Activated CD8-positive, alpha-beta memory T cell treated with anti-CD3 and anti-CD28 coated beads, Interleukin-2, amount 10 ng/mL, durations not matched to agents 7 days and 5 days (primary cell): ENCODE measurements at regions of chr20 and their contacts with region 1.

Region 1: DNA sequence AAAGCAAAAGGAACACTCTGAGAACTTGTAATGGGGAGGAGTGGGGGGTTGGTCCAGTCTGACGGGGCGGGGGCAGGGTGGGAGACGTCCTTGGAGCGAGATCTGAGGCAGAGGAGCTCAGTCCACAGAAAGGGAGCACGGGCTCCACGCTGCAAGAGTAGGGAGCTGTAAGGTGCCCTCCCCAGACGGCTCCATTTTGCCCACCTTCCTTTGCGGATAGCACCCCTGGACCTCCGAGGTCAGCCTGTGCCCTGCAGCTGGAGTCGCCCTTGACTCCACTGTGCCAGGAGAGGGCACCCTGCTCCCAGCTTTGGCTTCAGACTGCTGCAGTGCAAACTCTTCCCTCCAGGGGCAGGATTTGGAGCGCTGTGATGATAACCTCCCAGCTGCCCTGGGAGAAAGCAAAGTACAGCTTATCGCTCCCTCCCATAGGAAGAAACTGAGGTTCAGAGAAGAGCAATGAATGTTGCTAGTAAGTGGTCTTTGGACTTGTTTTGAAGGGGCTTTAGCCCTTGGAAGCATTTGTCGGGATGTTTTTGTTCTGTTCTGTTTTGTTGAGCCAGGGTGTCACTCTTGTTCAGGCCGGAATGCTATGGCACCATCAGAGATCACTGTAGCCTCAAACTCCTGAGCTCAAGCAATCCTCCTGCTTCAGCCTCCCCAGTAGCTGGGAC is 9.5 kb upstream of the AHCY start:
- DNase-seq: peak; percentile 92
- ATAC-seq: peak; percentile 100
- H3K4me3 Mint-ChIP-seq: no peak overlapping the region
- H3K27ac Mint-ChIP-seq: no peak overlapping the region
- H3K4me1 Mint-ChIP-seq: peaks cover 17% of the 10 kb centered on the region
- H3K27me3 Mint-ChIP-seq: peaks cover 27% of the 10 kb centered on the region

Region 2: GRCh38 chr20:33915726-33916331 is 396.9 kb before region 1 on chr20:
- CTCF ChIA-PET with region 1: no interaction called
- DNase-seq: peak; percentile 67
- ATAC-seq: peak; percentile 81
- H3K4me3 Mint-ChIP-seq: no peak overlapping the region
- H3K27ac Mint-ChIP-seq: no peak overlapping the region
- H3K4me1 Mint-ChIP-seq: peaks cover 19% of the 10 kb centered on the region
- H3K27me3 Mint-ChIP-seq: peaks cover 3% of the 10 kb centered on the region

Region 3: GRCh38 chr20:34190679-34191090 is 122.0 kb before region 1 on chr20:
- CTCF ChIA-PET with region 1: interaction called, 14 read pairs
- DNase-seq: peak; percentile 52
- ATAC-seq: peak; percentile 53
- H3K4me3 Mint-ChIP-seq: no peak overlapping the region
- H3K27ac Mint-ChIP-seq: no peak overlapping the region
- H3K4me1 Mint-ChIP-seq: peaks cover 10% of the 10 kb centered on the region
- H3K27me3 Mint-ChIP-seq: peaks cover 53% of the 10 kb centered on the region

Region 4: DNA sequence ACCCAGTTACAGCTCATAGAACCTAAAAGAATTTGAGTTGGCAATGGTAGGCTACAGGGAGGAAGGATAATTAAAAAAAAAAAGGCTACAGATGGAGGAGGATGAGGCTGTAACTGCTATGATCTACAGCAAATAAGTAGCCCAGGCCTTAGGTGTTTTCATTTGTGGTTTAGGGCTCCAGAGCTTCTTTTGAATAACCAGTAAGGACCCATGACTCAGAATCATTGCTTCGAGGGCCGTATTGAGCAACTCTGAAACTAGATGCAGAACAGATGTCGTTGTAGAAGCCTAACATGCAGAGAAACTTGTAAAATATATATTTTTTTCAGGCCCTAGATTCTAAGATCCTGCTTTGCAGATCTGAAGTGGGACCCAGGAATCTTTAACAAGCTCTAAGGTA is 90.5 kb before region 1 on chr20:
- CTCF ChIA-PET with region 1: no interaction called
- DNase-seq: no peak
- ATAC-seq: no peak
- H3K4me3 Mint-ChIP-seq: no peak overlapping the region
- H3K27ac Mint-ChIP-seq: no peak overlapping the region
- H3K4me1 Mint-ChIP-seq: no peaks in the 10 kb centered on the region
- H3K27me3 Mint-ChIP-seq: peaks cover 27% of the 10 kb centered on the region

Region 5: DNA sequence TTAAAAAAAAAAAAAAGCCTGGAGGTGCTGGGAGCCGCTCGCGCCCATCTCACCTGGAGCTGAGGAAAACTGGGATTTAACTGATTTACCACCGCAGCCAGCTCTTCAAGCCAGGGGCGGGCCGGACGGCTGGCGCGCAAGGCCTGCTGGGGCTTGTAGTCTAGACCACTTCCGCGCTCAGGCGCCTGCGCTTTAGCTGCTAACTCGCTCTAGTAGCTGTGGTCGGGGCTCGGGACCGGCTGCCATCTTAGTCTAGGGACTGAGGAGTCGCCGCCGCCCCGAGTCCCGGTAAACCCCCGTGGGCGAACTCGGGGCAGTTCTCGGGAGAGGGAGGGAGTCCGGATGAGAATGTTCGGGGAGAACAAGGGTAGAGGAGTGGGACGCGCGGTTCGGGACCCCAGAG is 50.4 kb after region 1 on chr20 and contains the start of gene ITCH:
- CTCF ChIA-PET with region 1: interaction called, 26 read pairs
- DNase-seq: peak; percentile 96
- ATAC-seq: peak; percentile 98
- H3K4me3 Mint-ChIP-seq: peak within 1 kb of the TSS; percentile 94
- H3K27ac Mint-ChIP-seq: peak within 1 kb of the TSS; percentile 98
- H3K4me1 Mint-ChIP-seq: peaks cover 39% of the 10 kb centered on the region
- H3K27me3 Mint-ChIP-seq: no peaks in the 10 kb centered on the region
- total RNA-seq, gene ITCH: 51.6 to 57.9 TPM

Region 6: DNA sequence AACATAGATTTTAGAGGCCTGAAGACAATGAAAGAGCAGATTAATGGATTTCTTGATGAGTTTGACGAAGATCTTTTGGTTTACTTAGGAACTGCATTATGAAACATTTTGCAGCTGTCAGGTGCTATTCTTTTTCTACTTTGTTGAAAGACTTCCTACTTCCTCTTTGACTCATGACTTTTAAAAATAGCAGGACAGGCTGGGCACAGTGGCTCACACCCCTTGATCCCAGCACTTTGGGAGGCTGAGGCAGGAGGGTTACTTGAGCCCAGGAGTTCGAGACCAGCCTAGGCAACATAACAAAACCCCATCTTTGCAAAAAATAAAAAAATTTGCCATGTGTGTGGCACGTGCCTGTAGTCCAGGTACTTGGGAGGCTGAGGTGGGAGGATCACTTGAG is 102.4 kb after region 1 on chr20:
- CTCF ChIA-PET with region 1: interaction called, 13 read pairs
- DNase-seq: no peak
- ATAC-seq: no peak
- H3K4me3 Mint-ChIP-seq: no peak overlapping the region
- H3K27ac Mint-ChIP-seq: peak overlapping the region; percentile 29
- H3K4me1 Mint-ChIP-seq: peaks cover 19% of the 10 kb centered on the region
- H3K27me3 Mint-ChIP-seq: no peaks in the 10 kb centered on the region

Region 7: GRCh38 chr20:34473262-34473883 is 160.7 kb after region 1 on chr20:
- CTCF ChIA-PET with region 1: interaction called, 36 read pairs
- DNase-seq: peak; percentile 59
- ATAC-seq: peak; percentile 61
- H3K4me3 Mint-ChIP-seq: no peak overlapping the region
- H3K27ac Mint-ChIP-seq: no peak overlapping the region
- H3K4me1 Mint-ChIP-seq: peaks cover 12% of the 10 kb centered on the region
- H3K27me3 Mint-ChIP-seq: no peaks in the 10 kb centered on the region

Region 8: GRCh38 chr20:34522969-34523871 is 210.5 kb after region 1 on chr20:
- CTCF ChIA-PET with region 1: interaction called, 110 read pairs
- DNase-seq: peak; percentile 64
- ATAC-seq: peak; percentile 65
- H3K4me3 Mint-ChIP-seq: no peak overlapping the region
- H3K27ac Mint-ChIP-seq: no peak overlapping the region
- H3K4me1 Mint-ChIP-seq: peaks cover 14% of the 10 kb centered on the region
- H3K27me3 Mint-ChIP-seq: no peaks in the 10 kb centered on the region

Region 9: GRCh38 chr20:34704177-34705007 is 391.7 kb after region 1 on chr20 and contains the start of gene TP53INP2:
- CTCF ChIA-PET with region 1: interaction called, 43 read pairs
- DNase-seq: peak; percentile 93
- ATAC-seq: peak; percentile 65
- H3K4me3 Mint-ChIP-seq: peak within 1 kb of the TSS; percentile 83
- H3K27ac Mint-ChIP-seq: peak within 1 kb of the TSS; percentile 85
- H3K4me1 Mint-ChIP-seq: peaks cover 22% of the 10 kb centered on the region
- H3K27me3 Mint-ChIP-seq: peaks cover 19% of the 10 kb centered on the region
- total RNA-seq, gene TP53INP2: 1.4 to 2.4 TPM